WTC11 (cell line): ENCODE measurements at regions of chr21 and their contacts with region 1.

Region 1: DNA sequence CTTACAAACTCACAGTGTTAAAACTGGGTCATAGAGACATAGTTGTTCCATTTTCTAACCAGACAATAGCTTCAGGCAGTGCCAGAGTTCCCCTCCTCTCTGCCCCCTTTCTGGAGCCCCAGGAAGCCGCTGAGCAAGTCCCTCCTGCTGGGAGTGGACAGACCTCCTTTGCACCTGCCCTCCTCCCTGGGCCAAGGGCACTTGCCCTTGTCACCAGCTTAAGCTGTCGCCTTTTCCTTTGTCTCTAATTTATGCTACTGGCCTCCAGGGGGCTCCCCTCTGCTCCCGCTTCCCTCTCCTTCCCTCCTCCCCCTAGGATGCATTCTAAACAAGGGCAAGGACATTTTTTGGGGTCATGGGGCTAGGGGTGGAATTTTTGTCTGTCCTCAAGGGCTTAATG is 182.4 kb downstream of the MIS18A start:
- DNase-seq: peak; percentile 63
- ATAC-seq: peak; percentile 83
- H3K4me3 Mint-ChIP-seq: no peak overlapping the region
- H3K27ac Mint-ChIP-seq: no peak overlapping the region
- H3K4me1 Mint-ChIP-seq: peaks cover 18% of the 10 kb centered on the region
- H3K27me3 Mint-ChIP-seq: peaks cover 13% of the 10 kb centered on the region
- CTCF ChIP-seq: peak; percentile 41; the same call in 1 of the 2 replicates

Region 2: DNA sequence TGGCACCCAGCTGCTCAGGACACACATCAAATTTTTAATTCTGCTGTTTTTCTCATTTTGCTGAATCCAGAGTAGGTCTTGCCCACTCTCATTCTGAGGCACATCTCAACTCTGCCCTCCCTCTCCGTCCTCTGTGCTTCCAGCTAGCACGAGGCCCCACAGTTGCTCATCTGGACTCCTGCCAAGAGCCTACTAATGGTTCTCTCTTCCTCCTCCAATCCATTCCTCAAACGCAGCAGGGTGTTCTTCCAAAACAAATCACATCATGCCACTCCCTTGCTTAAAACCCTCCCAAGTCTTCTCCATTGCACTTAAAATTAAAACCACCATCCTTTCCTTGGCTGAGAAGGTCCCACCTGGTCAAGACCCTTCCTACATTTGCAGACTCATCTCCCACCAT is 314.7 kb before region 1 on chr21:
- CTCF ChIA-PET with region 1: interaction called, 14 read pairs
- POLR2A ChIA-PET with region 1: interaction called, 4 read pairs
- DNase-seq: no peak
- ATAC-seq: no peak
- H3K4me3 Mint-ChIP-seq: no peak overlapping the region
- H3K27ac Mint-ChIP-seq: no peak overlapping the region
- H3K4me1 Mint-ChIP-seq: no peaks in the 10 kb centered on the region
- H3K27me3 Mint-ChIP-seq: no peaks in the 10 kb centered on the region
- CTCF ChIP-seq: no peak

Region 3: GRCh38 chr21:31873696-31874599 is 222.5 kb before region 1 on chr21:
- CTCF ChIA-PET with region 1: interaction called, 18 read pairs
- POLR2A ChIA-PET with region 1: no interaction called
- DNase-seq: peak; percentile 74
- ATAC-seq: peak; percentile 18
- H3K4me3 Mint-ChIP-seq: peak overlapping the region; percentile 63
- H3K27ac Mint-ChIP-seq: no peak overlapping the region
- H3K4me1 Mint-ChIP-seq: peaks cover 44% of the 10 kb centered on the region
- H3K27me3 Mint-ChIP-seq: peaks cover 43% of the 10 kb centered on the region
- CTCF ChIP-seq: peak; percentile 65

Region 4: GRCh38 chr21:32021319-32021994 is 75.0 kb before region 1 on chr21:
- CTCF ChIA-PET with region 1: no interaction called
- POLR2A ChIA-PET with region 1: no interaction called
- DNase-seq: no peak
- ATAC-seq: no peak
- H3K4me3 Mint-ChIP-seq: no peak overlapping the region
- H3K27ac Mint-ChIP-seq: no peak overlapping the region
- H3K4me1 Mint-ChIP-seq: no peaks in the 10 kb centered on the region
- H3K27me3 Mint-ChIP-seq: no peaks in the 10 kb centered on the region
- CTCF ChIP-seq: no peak

Region 5: GRCh38 chr21:32065632-32066031 is 30.8 kb before region 1 on chr21:
- CTCF ChIA-PET with region 1: interaction called, 17 read pairs
- POLR2A ChIA-PET with region 1: no interaction called
- DNase-seq: no peak
- ATAC-seq: no peak
- H3K4me3 Mint-ChIP-seq: no peak overlapping the region
- H3K27ac Mint-ChIP-seq: no peak overlapping the region
- H3K4me1 Mint-ChIP-seq: no peaks in the 10 kb centered on the region
- H3K27me3 Mint-ChIP-seq: no peaks in the 10 kb centered on the region
- CTCF ChIP-seq: no peak

Region 6: DNA sequence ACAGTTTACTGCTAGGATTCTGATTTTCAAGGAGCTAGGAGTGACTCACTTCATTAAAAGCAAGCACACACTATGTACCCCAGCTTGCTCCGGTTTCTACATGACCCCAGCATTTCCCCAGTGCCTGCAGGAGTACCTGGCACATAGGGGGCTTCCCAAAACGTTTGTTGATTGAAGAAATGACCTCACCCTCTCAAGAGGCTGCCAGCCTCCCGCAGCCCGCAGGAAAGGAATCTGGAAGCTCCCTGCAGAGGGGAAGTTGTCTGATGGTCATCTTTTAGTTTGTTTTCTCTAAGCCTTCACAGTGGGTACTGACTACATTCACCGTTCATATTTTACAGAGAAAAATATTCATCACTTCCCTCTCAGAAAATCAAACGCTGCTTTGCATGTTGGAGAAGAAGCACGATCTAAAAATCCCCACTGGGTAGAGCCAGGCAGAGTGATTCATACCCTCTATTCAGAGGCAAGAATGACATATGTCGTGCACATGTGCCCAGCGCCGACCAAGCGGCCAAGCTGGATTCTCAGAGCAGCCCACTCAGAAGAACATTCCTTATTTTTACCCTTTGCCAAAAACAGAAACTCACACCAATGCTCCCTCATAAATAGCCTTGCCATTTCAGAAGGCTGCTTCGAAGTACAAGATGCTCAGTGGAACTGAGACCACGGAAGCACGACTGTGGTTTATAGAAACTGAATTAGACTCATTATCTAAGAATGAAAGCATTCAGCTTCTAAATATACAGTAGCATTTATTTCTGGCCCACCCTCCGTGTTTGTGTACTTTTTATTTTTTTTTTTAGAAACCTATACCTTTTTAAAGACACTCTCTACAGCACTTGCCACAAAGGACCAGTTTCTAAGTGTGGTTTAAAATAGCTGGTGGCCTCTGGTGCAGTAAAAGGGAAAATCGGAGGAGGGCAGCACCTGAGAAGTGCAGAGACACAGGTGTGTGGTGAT is 39.3 kb after region 1 on chr21:
- CTCF ChIA-PET with region 1: interaction called, 10 read pairs
- POLR2A ChIA-PET with region 1: no interaction called
- DNase-seq: no peak
- ATAC-seq: 0 out of 2 replicates have a peak, but pooled peaks have one; percentile 32
- H3K4me3 Mint-ChIP-seq: no peak overlapping the region
- H3K27ac Mint-ChIP-seq: no peak overlapping the region
- H3K4me1 Mint-ChIP-seq: peaks cover 15% of the 10 kb centered on the region
- H3K27me3 Mint-ChIP-seq: no peaks in the 10 kb centered on the region
- CTCF ChIP-seq: no peak